RWPE1 (cell line): ENCODE measurements at regions of chr1 and their contacts with region 1.

Region 1: GRCh38 chr1:205061665-205062069 is 18.7 kb downstream of the CNTN2 start:
- DNase-seq: peak; percentile 81
- H3K27ac ChIP-seq: no peak overlapping the region
- CTCF ChIP-seq: peak; percentile 89

Region 2: DNA sequence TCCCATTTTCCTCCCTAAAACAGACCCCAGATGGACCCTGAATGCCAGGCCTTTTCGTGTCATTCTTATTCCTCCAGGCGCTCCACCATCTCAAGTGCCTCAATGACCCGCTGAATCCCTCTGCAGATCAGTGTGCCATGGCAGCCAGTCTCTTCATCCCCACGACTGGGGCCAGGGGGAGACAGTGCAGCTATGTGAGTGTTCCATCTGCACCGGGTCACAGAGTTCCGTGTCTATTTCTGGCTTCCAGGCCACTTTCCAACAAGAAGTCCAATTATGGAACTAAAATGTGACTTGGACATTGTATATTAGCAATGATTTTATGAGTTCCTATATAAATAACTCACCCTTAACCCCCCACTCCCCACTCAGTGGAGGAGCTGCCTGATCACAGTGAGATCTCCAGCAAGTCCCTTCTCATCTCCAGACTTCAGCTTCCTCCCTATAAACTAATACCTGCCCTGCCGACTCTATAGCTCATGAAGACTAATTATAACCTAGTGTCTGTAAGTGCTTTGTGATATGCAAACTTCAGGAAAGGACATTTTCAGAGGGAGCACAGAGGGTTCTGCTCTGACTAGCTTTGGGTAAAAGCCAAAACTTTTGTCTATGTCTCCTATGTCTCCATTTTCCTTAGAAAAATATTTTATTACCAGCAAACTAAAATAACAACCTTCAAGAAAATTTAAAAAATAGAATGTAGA is 247.3 kb before region 1 on chr1:
- CTCF ChIA-PET with region 1: interaction called, 11 read pairs
- POLR2A ChIA-PET with region 1: no interaction called
- DNase-seq: no peak
- H3K27ac ChIP-seq: no peak overlapping the region
- CTCF ChIP-seq: no peak

Region 3: GRCh38 chr1:204975570-204976235 is 86.0 kb before region 1 on chr1:
- CTCF ChIA-PET with region 1: interaction called, 68 read pairs
- POLR2A ChIA-PET with region 1: no interaction called
- DNase-seq: peak; percentile 89
- H3K27ac ChIP-seq: no peak overlapping the region
- CTCF ChIP-seq: peak; percentile 80

Region 4: DNA sequence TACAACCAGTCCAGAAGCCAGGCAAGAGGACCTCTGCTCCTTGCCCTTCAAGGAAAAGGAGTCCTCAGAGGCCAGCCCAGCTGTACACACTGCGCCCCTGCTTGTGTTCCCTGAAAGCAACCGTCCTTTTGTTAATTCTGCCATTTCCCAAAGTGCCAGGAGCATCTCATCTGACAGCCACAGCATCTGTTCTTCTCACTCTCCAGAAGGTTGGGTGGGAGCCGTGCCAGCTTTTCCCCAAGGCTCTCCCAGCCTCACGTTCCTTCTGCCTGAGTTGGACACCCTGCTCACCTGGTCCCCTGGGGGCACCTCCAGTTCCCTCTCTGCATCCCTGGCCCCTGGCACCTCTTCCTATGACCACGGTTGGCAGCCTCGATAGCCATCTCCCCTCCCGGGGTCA is 29.2 kb before region 1 on chr1:
- CTCF ChIA-PET with region 1: interaction called, 15 read pairs
- POLR2A ChIA-PET with region 1: no interaction called
- DNase-seq: no peak
- H3K27ac ChIP-seq: no peak overlapping the region
- CTCF ChIP-seq: no peak

Region 5: GRCh38 chr1:205048382-205048781 is 13.3 kb before region 1 on chr1:
- CTCF ChIA-PET with region 1: interaction called, 20 read pairs
- POLR2A ChIA-PET with region 1: no interaction called
- DNase-seq: no peak
- H3K27ac ChIP-seq: no peak overlapping the region
- CTCF ChIP-seq: no peak

Region 6: GRCh38 chr1:205082431-205082830 is 20.8 kb after region 1 on chr1:
- CTCF ChIA-PET with region 1: interaction called, 58 read pairs
- POLR2A ChIA-PET with region 1: no interaction called
- DNase-seq: no peak
- H3K27ac ChIP-seq: no peak overlapping the region
- CTCF ChIP-seq: no peak

Region 7: DNA sequence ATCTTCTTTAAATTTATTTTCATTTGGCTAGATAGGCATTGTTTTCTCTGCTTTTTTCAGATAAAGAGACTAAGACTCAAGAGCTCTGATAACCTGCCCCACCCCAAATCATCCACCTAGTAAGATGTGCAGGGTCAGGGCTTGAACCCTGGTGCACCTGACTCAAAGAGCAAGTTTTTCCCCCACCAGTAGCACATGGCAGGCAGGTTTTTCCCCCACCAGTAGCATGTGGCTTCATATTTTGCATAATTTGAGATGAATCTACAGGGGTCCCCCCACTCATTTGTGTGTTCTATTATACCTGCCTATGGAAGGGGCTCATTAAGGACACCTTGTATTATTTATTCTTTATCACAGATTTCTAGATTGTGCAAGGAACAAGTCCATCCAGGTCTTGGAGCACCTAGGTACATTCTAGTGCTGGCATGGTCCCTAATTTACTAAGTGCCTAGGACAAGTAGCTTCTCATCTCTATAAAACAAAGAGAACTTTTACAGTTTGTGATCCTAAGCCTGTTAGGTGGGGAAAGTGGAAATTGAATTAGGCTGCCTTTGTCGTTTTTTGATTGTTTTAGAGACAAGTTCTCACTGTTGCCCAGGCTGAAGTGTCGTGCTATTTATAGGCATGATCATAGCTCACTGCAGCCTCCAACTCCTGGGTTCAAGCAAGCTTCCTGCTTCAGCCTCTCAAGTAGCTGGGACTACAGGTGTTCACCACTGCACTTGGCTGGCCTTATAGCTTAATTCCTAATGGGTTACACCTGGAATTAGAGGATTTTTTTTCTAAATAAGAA is 975.2 kb after region 1 on chr1:
- CTCF ChIA-PET with region 1: interaction called, 13 read pairs
- POLR2A ChIA-PET with region 1: no interaction called
- DNase-seq: no peak
- H3K27ac ChIP-seq: no peak overlapping the region
- CTCF ChIP-seq: no peak